ENCODE measurements at regions of chr4 and their contacts with region 1.

Region 1: GRCh38 chr4:40316782-40317635 is 18.1 kb upstream of the CHRNA9 start:
- DNase-seq: peak; percentile 82
- ATAC-seq: peak; percentile 78
- H3K4me3 Mint-ChIP-seq: peak overlapping the region; percentile 78
- H3K27ac Mint-ChIP-seq: peak overlapping the region; percentile 97
- H3K4me1 Mint-ChIP-seq: peaks cover 39% of the 10 kb centered on the region
- H3K27me3 Mint-ChIP-seq: no peaks in the 10 kb centered on the region

Region 2: GRCh38 chr4:39908284-39908683 is 408.7 kb before region 1 on chr4:
- CTCF ChIA-PET with region 1: no interaction called
- DNase-seq: no peak
- ATAC-seq: no peak
- H3K4me3 Mint-ChIP-seq: no peak overlapping the region
- H3K27ac Mint-ChIP-seq: no peak overlapping the region
- H3K4me1 Mint-ChIP-seq: peaks cover 1% of the 10 kb centered on the region
- H3K27me3 Mint-ChIP-seq: no peaks in the 10 kb centered on the region

Region 3: GRCh38 chr4:40056716-40057585 is 260.1 kb before region 1 on chr4 and contains the start of gene N4BP2:
- CTCF ChIA-PET with region 1: interaction called, 39 read pairs
- DNase-seq: peak; percentile 81
- ATAC-seq: peak; percentile 65
- H3K4me3 Mint-ChIP-seq: peak within 1 kb of the TSS; percentile 98
- H3K27ac Mint-ChIP-seq: peak within 1 kb of the TSS; percentile 99
- H3K4me1 Mint-ChIP-seq: peaks cover 32% of the 10 kb centered on the region
- H3K27me3 Mint-ChIP-seq: peaks cover 5% of the 10 kb centered on the region
- total RNA-seq, gene N4BP2: 26.5 to 28.4 TPM

Region 4: GRCh38 chr4:40193016-40193571 is 123.9 kb before region 1 on chr4:
- CTCF ChIA-PET with region 1: interaction called, 18 read pairs
- DNase-seq: peak; percentile 62
- ATAC-seq: peak; percentile 18
- H3K4me3 Mint-ChIP-seq: peak overlapping the region; percentile 98
- H3K27ac Mint-ChIP-seq: peak overlapping the region; percentile 99
- H3K4me1 Mint-ChIP-seq: peaks cover 62% of the 10 kb centered on the region
- H3K27me3 Mint-ChIP-seq: no peaks in the 10 kb centered on the region

Region 5: DNA sequence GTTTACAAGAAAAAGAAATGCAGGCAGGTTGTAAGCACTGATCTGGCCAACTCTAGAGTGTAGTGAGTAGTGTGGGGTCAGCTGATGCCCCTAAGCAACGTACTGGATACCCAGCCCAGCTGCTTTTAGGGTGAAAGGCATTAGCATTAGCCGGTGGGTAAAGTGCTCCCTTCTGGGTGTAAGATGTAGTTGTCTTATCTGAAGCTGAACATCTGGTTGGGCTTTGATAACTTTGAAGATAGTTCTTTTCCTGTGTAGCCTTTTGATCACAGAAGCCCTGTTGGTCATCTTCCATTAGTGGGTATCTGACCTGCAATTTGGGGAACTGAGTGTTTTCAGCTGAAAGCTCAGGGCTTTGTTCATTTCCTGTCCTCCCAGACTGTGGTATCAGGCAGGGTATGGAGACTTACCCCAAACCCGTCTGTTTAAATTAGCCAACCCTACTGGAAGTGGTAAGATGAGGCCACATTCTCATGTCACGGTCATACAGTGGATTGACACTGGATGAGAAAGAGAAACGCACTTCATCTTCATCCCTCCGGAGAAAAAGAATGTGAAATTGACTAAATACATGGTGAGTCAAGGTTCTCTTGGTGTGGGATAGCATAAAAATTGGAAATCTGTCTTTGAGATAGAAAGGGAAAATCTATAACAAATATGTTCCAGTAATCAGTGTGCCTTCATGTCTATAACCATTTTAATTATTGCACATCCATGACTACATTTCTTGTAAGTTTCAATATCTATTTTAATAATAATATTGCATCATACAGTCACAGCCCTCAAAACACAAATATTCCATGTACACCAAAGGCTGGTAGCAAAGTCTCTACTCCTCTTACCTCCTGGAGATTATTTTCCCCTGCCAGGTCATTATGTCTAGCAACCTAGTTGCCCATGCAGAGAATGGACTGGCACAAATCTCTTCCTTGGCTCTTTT is 111.5 kb before region 1 on chr4:
- CTCF ChIA-PET with region 1: interaction called, 17 read pairs
- DNase-seq: peak; percentile 80
- ATAC-seq: peak; percentile 50
- H3K4me3 Mint-ChIP-seq: peak overlapping the region; percentile 98
- H3K27ac Mint-ChIP-seq: peak overlapping the region; percentile 99
- H3K4me1 Mint-ChIP-seq: peaks cover 62% of the 10 kb centered on the region
- H3K27me3 Mint-ChIP-seq: no peaks in the 10 kb centered on the region

Region 6: DNA sequence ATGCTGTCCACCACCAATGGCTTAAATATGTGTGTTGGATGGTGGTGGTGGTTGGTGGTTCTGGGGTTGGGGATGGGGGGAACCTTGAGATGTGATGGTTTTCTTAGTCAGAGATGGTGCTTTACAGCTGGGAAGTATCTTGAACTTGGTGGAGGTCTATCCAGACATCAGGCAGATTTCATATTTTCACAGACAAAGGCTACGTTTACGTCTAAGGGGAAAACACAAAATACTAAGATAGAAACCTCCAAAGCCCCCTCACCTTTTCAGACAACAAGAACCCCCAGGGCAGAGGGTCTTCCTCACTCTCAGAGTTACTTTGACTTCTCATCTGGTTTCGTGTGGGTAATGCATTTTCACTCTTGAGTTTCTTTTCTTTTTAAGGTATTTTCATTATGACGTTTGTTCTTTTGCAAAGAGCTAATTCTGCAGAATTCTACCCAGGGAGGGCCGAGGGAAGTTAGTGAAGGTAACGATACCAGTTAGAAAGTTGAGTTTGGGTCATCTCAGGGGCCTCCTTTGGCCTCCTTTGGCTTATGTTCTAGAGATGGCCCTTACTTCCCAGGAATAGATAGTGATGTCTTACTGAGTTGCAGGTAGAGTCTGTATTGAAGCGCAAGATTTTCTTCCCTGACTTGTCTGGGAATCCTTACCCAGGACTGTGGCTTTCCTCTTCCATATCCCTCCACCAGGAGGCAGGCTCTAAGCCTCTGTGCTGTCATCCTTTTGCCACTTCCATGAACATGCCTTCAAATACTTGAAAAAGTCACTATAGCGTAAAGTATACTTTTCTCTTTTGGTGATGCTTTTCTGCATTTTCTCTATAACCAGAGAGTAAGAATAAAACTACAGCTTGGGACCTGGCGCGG is 88.3 kb before region 1 on chr4:
- CTCF ChIA-PET with region 1: interaction called, 34 read pairs
- DNase-seq: peak; percentile 62
- ATAC-seq: peak; percentile 5
- H3K4me3 Mint-ChIP-seq: peak overlapping the region; percentile 58
- H3K27ac Mint-ChIP-seq: peak overlapping the region; percentile 93
- H3K4me1 Mint-ChIP-seq: peaks cover 95% of the 10 kb centered on the region
- H3K27me3 Mint-ChIP-seq: no peaks in the 10 kb centered on the region

Region 7: GRCh38 chr4:40301603-40302002 is 15.4 kb before region 1 on chr4:
- CTCF ChIA-PET with region 1: interaction called, 27 read pairs
- DNase-seq: peak; percentile 79
- ATAC-seq: peak; percentile 70
- H3K4me3 Mint-ChIP-seq: peak overlapping the region; percentile 58
- H3K27ac Mint-ChIP-seq: peak overlapping the region; percentile 91
- H3K4me1 Mint-ChIP-seq: peaks cover 84% of the 10 kb centered on the region
- H3K27me3 Mint-ChIP-seq: no peaks in the 10 kb centered on the region

Measured in activated CD8-positive, alpha-beta memory T cell treated with anti-CD3 and anti-CD28 coated beads, Interleukin-2, amount 10 ng/mL, durations not matched to agents 7 days and 5 days (primary cell).